Activated CD4-positive, alpha-beta T cell treated with anti-CD3 and anti-CD28 coated beads, Interleukin-2, amount 10 ng/mL, durations not matched to agents 24 days and 14 days (primary cell): ENCODE measurements at regions of chr4 and their contacts with region 1.

Region 1: GRCh38 chr4:89283226-89284009 is 24.2 kb downstream of the GPRIN3 start:
- DNase-seq: peak; percentile 72
- H3K4me3 Mint-ChIP-seq: peak overlapping the region; percentile 14
- H3K27ac Mint-ChIP-seq: peak overlapping the region; percentile 85
- H3K4me1 Mint-ChIP-seq: peaks cover 63% of the 10 kb centered on the region
- H3K27me3 Mint-ChIP-seq: no peaks in the 10 kb centered on the region

Region 2: GRCh38 chr4:89024051-89024675 is 259.3 kb before region 1 on chr4:
- intact Hi-C with region 1: no loop called
- DNase-seq: peak; percentile 89
- H3K4me3 Mint-ChIP-seq: no peak overlapping the region
- H3K27ac Mint-ChIP-seq: no peak overlapping the region
- H3K4me1 Mint-ChIP-seq: peaks cover 2% of the 10 kb centered on the region
- H3K27me3 Mint-ChIP-seq: no peaks in the 10 kb centered on the region

Region 3: GRCh38 chr4:89270792-89271191 is 12.6 kb before region 1 on chr4:
- intact Hi-C with region 1: loop called (anchors 2 kb)
- DNase-seq: no peak
- H3K4me3 Mint-ChIP-seq: no peak overlapping the region
- H3K27ac Mint-ChIP-seq: peak overlapping the region; percentile 19
- H3K4me1 Mint-ChIP-seq: peaks cover 57% of the 10 kb centered on the region
- H3K27me3 Mint-ChIP-seq: no peaks in the 10 kb centered on the region

Region 4: GRCh38 chr4:89625599-89626298 is 342.3 kb after region 1 on chr4:
- intact Hi-C with region 1: no loop called
- DNase-seq: no peak
- H3K4me3 Mint-ChIP-seq: no peak overlapping the region
- H3K27ac Mint-ChIP-seq: no peak overlapping the region
- H3K4me1 Mint-ChIP-seq: peaks cover 4% of the 10 kb centered on the region
- H3K27me3 Mint-ChIP-seq: peaks cover 18% of the 10 kb centered on the region